GM10248 (cell line): ENCODE measurements at regions of chr19 and their contacts with region 1.

Region 1: DNA sequence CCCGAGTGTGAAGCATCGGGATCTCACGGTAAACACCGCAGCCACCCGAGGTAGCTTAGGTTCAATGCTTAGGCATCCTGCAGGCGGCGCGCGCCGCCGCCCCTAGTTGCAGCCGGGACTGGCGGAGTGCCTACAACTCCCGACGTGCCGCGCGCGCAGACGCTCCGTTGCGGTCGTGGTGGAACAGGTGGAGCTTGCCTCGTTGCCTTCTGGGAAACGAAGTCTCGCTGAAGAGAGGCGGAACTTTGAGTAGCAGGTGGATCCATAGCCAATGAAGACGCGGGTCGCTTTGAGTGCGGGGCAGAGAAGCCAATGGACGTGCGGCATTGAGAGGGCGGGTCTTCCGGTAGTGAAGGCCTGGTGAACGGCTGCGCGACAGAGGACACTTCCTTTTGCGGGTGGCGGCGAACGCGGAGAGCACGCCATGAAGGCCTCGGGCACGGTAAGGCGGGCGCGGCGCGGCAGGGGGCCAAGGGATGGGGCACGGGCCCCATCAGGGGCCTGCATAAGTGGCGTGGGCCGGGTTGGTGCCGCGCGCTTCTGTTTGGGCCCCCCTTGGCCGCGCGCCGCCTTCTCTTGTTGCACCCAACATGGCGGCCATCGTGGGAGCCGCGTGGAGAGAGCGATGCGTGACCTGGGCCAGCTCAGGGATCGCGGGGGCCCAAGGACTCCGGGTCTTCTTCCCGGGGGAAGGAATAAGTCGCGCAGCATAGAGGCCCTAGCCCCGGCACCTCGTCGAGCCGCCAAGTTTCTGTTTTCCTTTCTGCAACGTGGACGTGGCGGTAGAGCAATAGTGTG is at the start of gene RPL18A:
- DNase-seq: peak; percentile 98
- CTCF ChIP-seq: peak; percentile 83

Region 2: GRCh38 chr19:17703824-17704463 is 155.8 kb before region 1 on chr19:
- CTCF ChIA-PET with region 1: interaction called, 46 read pairs
- POLR2A ChIA-PET with region 1: no interaction called
- DNase-seq: peak; percentile 84
- CTCF ChIP-seq: peak; percentile 86

Region 3: DNA sequence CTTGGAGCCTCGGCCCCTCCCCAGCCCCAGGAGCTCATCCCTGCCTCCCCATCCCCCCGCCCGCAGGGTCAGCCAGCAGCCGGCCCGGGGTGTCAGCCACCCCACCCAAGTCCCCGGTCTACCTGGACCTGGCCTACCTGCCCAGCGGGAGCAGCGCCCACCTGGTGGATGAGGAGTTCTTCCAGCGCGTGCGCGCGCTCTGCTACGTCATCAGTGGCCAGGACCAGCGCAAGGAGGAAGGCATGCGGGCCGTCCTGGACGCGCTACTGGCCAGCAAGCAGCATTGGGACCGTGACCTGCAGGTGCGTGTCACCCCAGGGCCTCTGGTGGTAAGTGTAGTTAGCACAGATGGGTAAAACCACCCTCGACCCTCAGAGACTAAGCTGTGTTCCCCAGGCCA is 126.6 kb before region 1 on chr19:
- CTCF ChIA-PET with region 1: no interaction called
- POLR2A ChIA-PET with region 1: no interaction called
- DNase-seq: no peak
- CTCF ChIP-seq: no peak

Region 4: GRCh38 chr19:17766543-17767131 is 93.1 kb before region 1 on chr19:
- CTCF ChIA-PET with region 1: interaction called, 15 read pairs
- POLR2A ChIA-PET with region 1: no interaction called
- DNase-seq: peak; percentile 70
- CTCF ChIP-seq: peak; percentile 75

Region 5: GRCh38 chr19:17848595-17849292 is 11.0 kb before region 1 on chr19:
- CTCF ChIA-PET with region 1: interaction called, 26 read pairs
- POLR2A ChIA-PET with region 1: interaction called, 5 read pairs
- DNase-seq: no peak
- CTCF ChIP-seq: no peak

Region 6: DNA sequence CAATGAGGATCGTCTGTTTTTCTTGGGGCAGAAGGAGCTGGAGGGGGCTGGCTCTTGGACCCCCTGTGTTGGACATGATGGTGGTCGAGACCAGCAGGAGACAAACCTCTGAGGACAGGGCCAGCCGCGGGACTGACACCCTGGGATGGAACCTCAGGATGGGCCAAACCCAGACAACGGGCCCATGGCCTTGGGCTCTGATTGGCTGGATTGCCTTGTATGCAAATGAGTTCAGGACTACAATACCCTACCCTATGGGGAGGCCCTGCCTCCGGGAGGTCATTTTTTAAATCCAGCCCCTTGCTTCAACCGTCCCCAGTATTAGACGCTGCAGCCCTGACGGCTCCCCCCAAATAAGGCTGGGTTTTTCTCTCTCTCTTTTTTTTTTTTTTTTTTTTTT is 34.0 kb after region 1 on chr19:
- CTCF ChIA-PET with region 1: interaction called, 3 read pairs
- POLR2A ChIA-PET with region 1: interaction called, 10 read pairs
- DNase-seq: no peak
- CTCF ChIP-seq: no peak